Activated naive CD4-positive, alpha-beta T cell treated with anti-CD3 and anti-CD28 coated beads for 36 hours (primary cell): ENCODE measurements at regions of chr18 and their contacts with region 1.

Region 1: GRCh38 chr18:59402432-59403090 is 43.5 kb upstream of the LMAN1 start:
- DNase-seq: peak; percentile 85
- H3K4me3 Mint-ChIP-seq: no peak overlapping the region
- H3K27ac Mint-ChIP-seq: no peak overlapping the region
- H3K4me1 Mint-ChIP-seq: peaks cover 5% of the 10 kb centered on the region
- H3K27me3 Mint-ChIP-seq: no peaks in the 10 kb centered on the region

Region 2: GRCh38 chr18:59249205-59249774 is 153.3 kb before region 1 on chr18:
- CTCF ChIA-PET with region 1: interaction called, 61 read pairs
- intact Hi-C with region 1: loop called (anchors 2 kb)
- DNase-seq: peak; percentile 66
- H3K4me3 Mint-ChIP-seq: no peak overlapping the region
- H3K27ac Mint-ChIP-seq: no peak overlapping the region
- H3K4me1 Mint-ChIP-seq: no peaks in the 10 kb centered on the region
- H3K27me3 Mint-ChIP-seq: peaks cover 54% of the 10 kb centered on the region

Region 3: DNA sequence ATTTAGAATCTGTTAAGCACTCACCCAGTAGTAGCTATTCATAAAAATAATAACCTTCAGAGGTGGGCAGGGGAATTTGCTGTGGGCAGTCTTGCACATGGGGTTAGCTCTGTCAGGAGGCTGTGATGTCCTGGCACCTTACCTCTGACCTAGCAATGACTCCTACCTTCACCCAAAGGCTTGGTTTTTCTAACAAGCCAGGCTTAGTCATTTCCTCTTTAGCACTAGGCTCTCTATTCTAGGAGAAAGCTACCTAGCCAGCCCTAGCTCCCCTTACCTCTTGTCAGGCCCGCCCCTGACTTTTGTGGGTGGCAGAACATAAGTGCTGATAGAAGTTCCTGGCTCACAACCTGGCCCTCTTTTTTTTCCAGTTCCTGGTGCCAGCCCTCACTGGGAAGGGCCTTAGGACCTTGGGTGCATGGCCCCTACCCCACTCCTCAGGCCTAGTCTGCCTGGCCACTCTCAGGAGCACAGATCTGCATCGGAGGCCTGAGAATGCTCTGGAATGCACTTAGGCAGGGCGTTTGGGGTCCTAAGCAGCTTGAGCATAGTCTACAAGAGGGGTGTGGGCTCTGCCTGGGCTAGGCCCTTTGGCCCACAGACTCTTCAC is 101.8 kb before region 1 on chr18:
- CTCF ChIA-PET with region 1: interaction called, 162 read pairs
- intact Hi-C with region 1: no loop called
- DNase-seq: peak; percentile 11
- H3K4me3 Mint-ChIP-seq: no peak overlapping the region
- H3K27ac Mint-ChIP-seq: no peak overlapping the region
- H3K4me1 Mint-ChIP-seq: no peaks in the 10 kb centered on the region
- H3K27me3 Mint-ChIP-seq: peaks cover 7% of the 10 kb centered on the region

Region 4: DNA sequence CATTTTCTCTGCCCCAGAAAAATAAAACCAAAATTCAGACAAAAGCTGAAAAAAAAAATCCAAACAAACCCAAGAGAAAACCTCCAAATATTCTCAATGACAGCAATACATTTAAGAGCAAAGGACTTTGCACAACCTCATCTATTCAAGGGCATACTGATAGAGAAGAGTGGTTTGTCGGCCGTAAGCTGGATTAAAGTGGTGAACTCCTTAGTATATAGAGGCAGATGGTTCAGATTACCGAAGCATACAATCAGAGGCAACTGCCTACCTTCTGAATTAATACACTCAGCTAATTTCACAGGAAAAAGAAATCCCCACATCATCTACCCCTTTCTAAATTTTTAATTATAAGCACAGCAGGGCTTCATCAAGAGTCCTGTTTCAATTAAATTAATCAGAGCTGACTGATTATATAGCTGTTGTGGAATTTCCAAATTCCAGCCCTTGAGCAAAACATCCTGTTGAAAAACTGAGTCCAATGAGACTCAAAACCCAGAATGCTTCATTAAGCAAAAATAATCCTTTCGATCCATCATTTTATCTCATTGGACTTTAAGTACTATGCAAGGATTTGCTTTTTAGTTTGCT is 84.0 kb before region 1 on chr18 and contains the start of gene CPLX4:
- CTCF ChIA-PET with region 1: interaction called, 162 read pairs
- intact Hi-C with region 1: no loop called
- DNase-seq: no peak
- H3K4me3 Mint-ChIP-seq: no peak within 1 kb of the TSS
- H3K27ac Mint-ChIP-seq: no peak within 1 kb of the TSS
- H3K4me1 Mint-ChIP-seq: no peaks in the 10 kb centered on the region
- H3K27me3 Mint-ChIP-seq: peaks cover 4% of the 10 kb centered on the region
- total RNA-seq, gene CPLX4: not detected

Region 5: GRCh38 chr18:59352250-59352855 is 50.2 kb before region 1 on chr18:
- CTCF ChIA-PET with region 1: interaction called, 12 read pairs
- intact Hi-C with region 1: loop called (anchors 5 kb)
- DNase-seq: no peak
- H3K4me3 Mint-ChIP-seq: no peak overlapping the region
- H3K27ac Mint-ChIP-seq: peak overlapping the region; percentile 9
- H3K4me1 Mint-ChIP-seq: peaks cover 44% of the 10 kb centered on the region
- H3K27me3 Mint-ChIP-seq: no peaks in the 10 kb centered on the region